HepG2 (cell line): ENCODE measurements at regions of chr15 and their contacts with region 1.

Region 1: DNA sequence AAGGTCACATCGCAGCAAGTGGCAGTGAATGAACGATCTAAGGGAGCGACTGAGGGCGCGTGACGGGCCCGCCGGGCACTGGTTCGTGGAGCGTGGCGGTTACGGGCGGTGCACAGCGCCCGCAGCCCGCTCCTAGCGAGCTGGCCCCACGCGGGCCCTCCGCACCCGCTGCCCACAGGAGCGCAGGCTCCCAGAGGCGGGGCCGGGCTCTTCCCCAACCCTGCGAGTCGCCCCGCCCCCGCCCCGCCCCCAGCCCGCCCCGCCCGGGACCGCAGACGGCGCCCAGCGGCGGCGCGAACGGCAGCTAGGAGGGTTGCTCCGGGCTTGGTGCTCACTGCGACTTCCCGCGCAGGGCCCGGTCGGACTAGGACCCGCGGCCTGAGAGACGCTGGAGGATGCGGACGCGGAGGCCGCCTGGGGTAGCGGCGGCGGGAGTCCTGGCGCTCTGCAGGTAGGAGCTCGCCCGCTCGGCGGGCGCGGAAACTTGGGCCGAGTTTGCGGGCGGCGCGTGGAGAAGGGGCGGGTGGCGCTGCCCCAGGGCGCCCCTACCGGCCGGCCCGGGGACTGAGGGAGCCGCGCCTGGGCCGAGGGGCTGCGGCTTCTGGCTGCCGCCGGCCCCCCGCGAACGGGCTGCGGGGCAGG is at the start of gene C15orf39:
- DNase-seq: peak; percentile 33
- ATAC-seq: peak; percentile 63
- H3K4me3 ChIP-seq: peak within 1 kb of the TSS; percentile 88 to 98 (median 91)
- H3K27ac ChIP-seq: peak within 1 kb of the TSS; percentile 80
- H3K4me1 ChIP-seq: peaks cover 77% of the 10 kb centered on the region
- H3K27me3 ChIP-seq: no peaks in the 10 kb centered on the region; a peak in 1 of 5 replicates
- CTCF ChIP-seq: peak; percentile 67
- EP300 ChIP-seq: no peak
- POLR2A ChIP-seq: peak in 1 of 2 experiments; percentile 89; a peak in 2 of 4 replicates
- RAD21 ChIP-seq: peak; percentile 85
- total RNA-seq, gene C15orf39: 13.5 and 17.5 TPM in 2 replicates

Region 2: DNA sequence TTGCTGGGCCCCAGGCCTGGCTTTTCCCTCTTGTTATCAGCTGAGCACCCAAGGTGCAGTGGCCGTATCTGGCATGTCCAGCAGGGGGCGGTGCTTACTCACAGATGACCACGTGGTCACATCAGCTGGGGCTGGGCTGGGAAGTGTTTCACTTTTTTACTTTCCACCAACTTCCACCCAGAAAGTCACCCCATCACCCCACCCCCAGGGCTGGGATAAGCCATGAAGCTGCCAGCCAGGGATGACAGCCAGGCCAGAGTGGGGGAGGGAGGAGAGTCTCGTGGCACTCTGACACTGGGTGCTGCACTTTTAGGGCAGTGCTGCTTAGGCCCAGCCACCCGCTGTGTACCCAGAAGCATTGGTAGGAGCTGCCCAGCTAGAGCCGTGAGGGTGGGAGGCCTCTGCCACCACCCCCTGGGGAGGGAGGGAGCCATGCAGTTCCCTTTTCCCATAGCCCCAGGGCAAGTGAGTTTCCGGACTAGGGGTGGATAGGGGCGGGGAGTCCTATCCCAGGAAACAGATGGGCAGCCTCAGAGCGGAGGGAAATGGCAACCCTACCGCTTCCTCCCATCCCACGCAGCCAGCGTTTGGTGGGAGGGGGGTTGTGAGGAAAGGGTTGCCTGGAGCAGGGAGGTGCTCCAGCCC is 172.2 kb before region 1 on chr15:
- CTCF ChIA-PET with region 1: interaction called, 37 read pairs
- POLR2A ChIA-PET with region 1: interaction called, 13 read pairs
- in situ Hi-C with region 1: no loop called
- intact Hi-C with region 1: loop called (anchors 1 kb)
- DNase-seq: peak; percentile 66
- ATAC-seq: peak; percentile 90
- H3K4me3 ChIP-seq: no peak overlapping the region
- H3K27ac ChIP-seq: no peak overlapping the region
- H3K4me1 ChIP-seq: peaks cover 35% of the 10 kb centered on the region
- H3K27me3 ChIP-seq: no peaks in the 10 kb centered on the region
- CTCF ChIP-seq: peak; percentile 95
- EP300 ChIP-seq: no peak
- POLR2A ChIP-seq: no peak
- RAD21 ChIP-seq: peak; percentile 94

Region 3: DNA sequence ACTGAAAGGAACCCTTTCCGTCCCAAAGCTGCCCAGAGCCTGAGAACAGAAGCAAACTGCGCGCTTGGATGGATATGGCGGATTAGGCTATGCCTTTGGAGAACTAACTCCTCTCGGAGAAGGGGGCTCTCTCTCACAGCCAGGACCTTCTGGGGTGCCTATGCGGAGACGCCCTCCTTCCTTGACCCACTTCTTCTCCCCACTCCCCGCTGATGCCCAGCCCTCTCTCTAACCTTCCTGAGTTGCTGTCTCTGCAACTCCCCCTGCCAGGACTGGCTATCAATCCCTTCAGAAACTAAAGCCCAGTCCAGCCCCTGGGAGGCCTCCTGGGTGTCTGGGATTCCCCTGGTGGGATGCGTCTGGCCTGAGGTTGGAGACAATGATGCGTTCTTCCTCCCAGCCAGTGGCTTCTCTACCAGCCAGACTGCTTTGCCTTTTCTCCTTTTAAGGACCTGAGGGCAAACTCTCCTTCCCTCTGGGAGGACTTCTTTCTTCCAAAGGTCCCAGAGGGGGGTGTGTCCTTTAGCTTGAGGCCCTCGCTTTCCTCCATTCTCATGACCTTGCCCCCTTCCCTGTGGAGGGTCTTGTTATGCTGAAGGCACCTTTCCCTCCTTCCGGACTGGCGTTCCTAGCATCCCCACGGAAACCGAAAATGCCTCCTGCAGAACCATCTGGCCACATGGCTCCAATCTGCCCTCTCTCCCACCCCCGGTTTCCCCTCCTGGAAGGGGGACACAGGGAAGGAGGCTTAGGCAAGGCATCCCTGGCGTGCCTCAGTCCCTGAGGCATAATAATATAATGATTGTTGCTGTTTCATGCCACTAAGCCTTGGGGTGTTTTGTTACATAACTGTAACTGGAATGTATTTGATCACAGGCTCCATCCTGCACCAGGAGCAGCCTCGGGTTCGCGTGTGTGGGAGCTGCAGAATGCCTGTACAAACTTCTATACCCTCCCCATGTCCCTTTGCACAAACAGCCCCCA is 63.4 kb before region 1 on chr15:
- CTCF ChIA-PET with region 1: no interaction called
- POLR2A ChIA-PET with region 1: interaction called, 28 read pairs
- in situ Hi-C with region 1: no loop called
- intact Hi-C with region 1: loop called (anchors 1 kb)
- DNase-seq: no peak
- ATAC-seq: no peak
- H3K4me3 ChIP-seq: no peak overlapping the region
- H3K27ac ChIP-seq: peak overlapping the region; percentile 96
- H3K4me1 ChIP-seq: peaks cover 71% of the 10 kb centered on the region
- H3K27me3 ChIP-seq: no peaks in the 10 kb centered on the region
- CTCF ChIP-seq: no peak
- EP300 ChIP-seq: no peak
- POLR2A ChIP-seq: no peak
- RAD21 ChIP-seq: no peak

Region 4: GRCh38 chr15:75153087-75153486 is 48.6 kb before region 1 on chr15:
- CTCF ChIA-PET with region 1: no interaction called
- POLR2A ChIA-PET with region 1: interaction called, 6 read pairs
- in situ Hi-C with region 1: loop called (anchors 5 kb)
- intact Hi-C with region 1: no loop called
- DNase-seq: peak; percentile 82
- ATAC-seq: peak; percentile 67
- H3K4me3 ChIP-seq: no peak overlapping the region
- H3K27ac ChIP-seq: peak overlapping the region; percentile 5
- H3K4me1 ChIP-seq: peaks cover 67% of the 10 kb centered on the region
- H3K27me3 ChIP-seq: no peaks in the 10 kb centered on the region
- CTCF ChIP-seq: no peak
- EP300 ChIP-seq: no peak
- POLR2A ChIP-seq: no peak
- RAD21 ChIP-seq: no peak